Activated CD4-positive, alpha-beta memory T cell treated with anti-CD3 and anti-CD28 coated beads for 36 hours (primary cell): ENCODE measurements at regions of chr12 and their contacts with region 1.

Region 1: GRCh38 chr12:131402781-131403396 is 308.0 kb upstream of the SFSWAP start:
- DNase-seq: no peak
- H3K4me3 Mint-ChIP-seq: no peak overlapping the region
- H3K27ac Mint-ChIP-seq: no peak overlapping the region
- H3K4me1 Mint-ChIP-seq: no peaks in the 10 kb centered on the region
- H3K27me3 Mint-ChIP-seq: no peaks in the 10 kb centered on the region

Region 2: GRCh38 chr12:131264625-131265024 is 138.3 kb before region 1 on chr12:
- CTCF ChIA-PET with region 1: no interaction called
- POLR2A ChIA-PET with region 1: no interaction called
- intact Hi-C with region 1: loop called (anchors 5 kb)
- DNase-seq: no peak
- H3K4me3 Mint-ChIP-seq: no peak overlapping the region
- H3K27ac Mint-ChIP-seq: no peak overlapping the region
- H3K4me1 Mint-ChIP-seq: no peaks in the 10 kb centered on the region
- H3K27me3 Mint-ChIP-seq: no peaks in the 10 kb centered on the region